Activated T-helper 2 cell treated with anti-CD3 and anti-CD28 coated beads, Interferon-gamma antibody, Interleukin-2, Interleukin-4, amounts not matched to agents 10 μg/mL and 5 μg/mL and 100 μg/mL, durations not matched to agents 14 hours and 24 hours and 36 hours (primary cell): ENCODE measurements at regions of chr10 and their contacts with region 1.

Region 1: DNA sequence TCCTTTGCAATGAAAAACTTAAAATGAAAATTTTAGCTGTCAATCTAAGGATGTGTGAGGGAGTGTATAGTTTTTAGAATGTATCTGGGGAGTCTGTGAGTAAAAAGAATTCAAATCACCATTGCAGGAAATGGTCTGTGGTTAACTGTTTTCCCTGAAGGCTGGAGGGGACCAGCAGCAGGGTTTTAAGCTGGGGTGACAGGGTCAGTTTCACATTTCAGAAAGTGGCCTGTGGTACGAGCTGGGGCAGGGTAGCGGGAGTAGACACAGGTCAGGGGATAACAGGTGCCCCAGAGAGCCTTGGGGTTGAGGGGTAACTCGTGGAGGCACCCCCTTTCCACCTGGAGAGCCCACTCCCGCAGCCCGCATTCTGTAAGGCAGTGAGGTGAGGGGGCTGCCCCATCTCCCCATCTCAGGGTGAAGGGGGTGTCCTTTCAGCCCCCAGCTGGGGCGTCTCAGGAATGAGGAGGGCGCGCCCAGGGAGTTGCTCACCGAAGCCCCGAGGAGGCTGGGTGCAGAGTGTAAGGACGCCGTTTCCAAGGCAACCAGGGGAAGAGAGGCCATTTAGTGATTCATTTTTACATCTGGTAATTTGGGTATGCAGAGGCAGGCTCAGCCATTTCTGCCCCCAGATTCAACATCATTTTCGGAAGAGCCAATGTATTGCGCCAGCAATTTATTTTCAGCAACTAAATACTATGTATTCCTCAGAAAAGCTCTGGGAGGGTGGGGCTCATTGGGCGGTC is 168.9 kb downstream of the SLIT1 start:
- DNase-seq: peak; percentile 17
- H3K4me3 Mint-ChIP-seq: peak overlapping the region; percentile 4
- H3K27ac Mint-ChIP-seq: peak overlapping the region; percentile 79
- H3K4me1 Mint-ChIP-seq: peaks cover 19% of the 10 kb centered on the region
- H3K27me3 Mint-ChIP-seq: no peaks in the 10 kb centered on the region

Region 2: GRCh38 chr10:96910488-96911395 is 106.2 kb before region 1 on chr10:
- intact Hi-C with region 1: loop called (anchors 2 kb)
- DNase-seq: no peak
- H3K4me3 Mint-ChIP-seq: no peak overlapping the region
- H3K27ac Mint-ChIP-seq: peak overlapping the region; percentile 29
- H3K4me1 Mint-ChIP-seq: peaks cover 17% of the 10 kb centered on the region
- H3K27me3 Mint-ChIP-seq: no peaks in the 10 kb centered on the region

Region 3: DNA sequence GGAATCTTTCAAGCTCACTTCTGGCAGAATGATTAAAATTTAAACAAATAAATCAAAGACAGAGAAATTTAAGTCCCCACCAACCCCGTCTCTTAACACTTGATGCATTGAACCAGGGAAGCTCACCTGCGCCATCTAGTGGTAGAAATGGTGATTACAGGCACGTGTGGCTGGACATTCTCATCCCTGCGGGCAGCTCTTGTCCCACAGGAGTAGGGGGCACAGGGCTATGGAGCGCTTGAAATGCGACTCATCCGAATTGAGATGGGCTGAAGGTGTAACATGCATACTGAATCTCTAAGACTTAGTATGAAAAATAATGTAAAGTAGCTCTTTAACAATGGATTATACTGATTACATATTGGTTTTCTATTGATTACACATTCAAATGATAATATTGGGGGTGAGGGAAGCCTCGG is 193.7 kb after region 1 on chr10:
- intact Hi-C with region 1: no loop called
- DNase-seq: peak; percentile 41
- H3K4me3 Mint-ChIP-seq: no peak overlapping the region
- H3K27ac Mint-ChIP-seq: no peak overlapping the region
- H3K4me1 Mint-ChIP-seq: no peaks in the 10 kb centered on the region
- H3K27me3 Mint-ChIP-seq: no peaks in the 10 kb centered on the region